ENCODE measurements at regions of chr2 and their contacts with region 1.

Region 1: GRCh38 chr2:235595422-235596010 is 101.7 kb downstream of the AGAP1 start:
- DNase-seq: peak; percentile 77
- ATAC-seq: peak; percentile 66
- H3K4me3 ChIP-seq: no peak overlapping the region
- H3K27ac ChIP-seq: no peak overlapping the region
- H3K4me1 ChIP-seq: peaks cover 6% of the 10 kb centered on the region
- H3K27me3 ChIP-seq: no peaks in the 10 kb centered on the region
- CTCF ChIP-seq: peak; percentile 91
- POLR2A ChIP-seq: peak; percentile 40; the same call in 1 of the 2 replicates
- RAD21 ChIP-seq: peak; percentile 91

Region 2: GRCh38 chr2:235135990-235136561 is 459.4 kb before region 1 on chr2:
- CTCF ChIA-PET with region 1: interaction called, 5 read pairs
- POLR2A ChIA-PET with region 1: no interaction called
- dilution Hi-C with region 1: no loop called
- in situ Hi-C with region 1: no loop called
- intact Hi-C with region 1: loop called (anchors 1 kb)
- DNase-seq: peak; percentile 82
- ATAC-seq: peak; percentile 96
- H3K4me3 ChIP-seq: no peak overlapping the region
- H3K27ac ChIP-seq: no peak overlapping the region
- H3K4me1 ChIP-seq: no peaks in the 10 kb centered on the region
- H3K27me3 ChIP-seq: peaks cover 36% of the 10 kb centered on the region
- CTCF ChIP-seq: peak; percentile 86
- POLR2A ChIP-seq: no peak
- RAD21 ChIP-seq: peak; percentile 88

Region 3: DNA sequence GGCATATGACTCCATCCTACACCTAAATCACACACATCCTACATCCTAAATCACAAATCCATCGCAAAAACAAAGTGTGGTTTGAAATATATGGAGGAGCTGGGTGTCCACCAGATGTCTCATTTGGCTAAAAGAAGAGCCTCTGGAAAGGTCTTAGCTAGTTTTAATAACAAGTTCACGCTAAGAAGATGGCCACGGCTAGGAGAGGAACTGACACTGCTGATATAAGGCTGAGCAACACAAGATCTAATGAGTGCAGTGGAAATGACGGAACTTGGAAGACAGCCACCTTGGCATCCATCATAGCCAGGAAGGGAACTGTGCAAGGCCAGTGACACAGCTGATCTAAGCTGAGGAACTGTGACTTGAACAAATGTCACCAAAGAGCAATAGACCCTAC is 161.7 kb before region 1 on chr2:
- CTCF ChIA-PET with region 1: interaction called, 4 read pairs
- POLR2A ChIA-PET with region 1: no interaction called
- dilution Hi-C with region 1: no loop called
- in situ Hi-C with region 1: no loop called
- intact Hi-C with region 1: loop called (anchors 10 kb)
- DNase-seq: peak; percentile 15
- ATAC-seq: peak; percentile 24; the same call in 1 of the 2 replicates
- H3K4me3 ChIP-seq: no peak overlapping the region
- H3K27ac ChIP-seq: no peak overlapping the region
- H3K4me1 ChIP-seq: no peaks in the 10 kb centered on the region
- H3K27me3 ChIP-seq: peaks cover 30% of the 10 kb centered on the region
- CTCF ChIP-seq: 0 out of 2 replicates have a peak, but pooled peaks have one; percentile 17
- POLR2A ChIP-seq: no peak
- RAD21 ChIP-seq: no peak

Region 4: GRCh38 chr2:235551965-235552364 is 43.6 kb before region 1 on chr2:
- CTCF ChIA-PET with region 1: interaction called, 11 read pairs
- POLR2A ChIA-PET with region 1: no interaction called
- dilution Hi-C with region 1: no loop called
- in situ Hi-C with region 1: no loop called
- intact Hi-C with region 1: no loop called
- DNase-seq: peak; percentile 48
- ATAC-seq: peak; percentile 79
- H3K4me3 ChIP-seq: no peak overlapping the region
- H3K27ac ChIP-seq: no peak overlapping the region
- H3K4me1 ChIP-seq: peaks cover 4% of the 10 kb centered on the region; the same call in 1 of the 2 replicates
- H3K27me3 ChIP-seq: no peaks in the 10 kb centered on the region
- CTCF ChIP-seq: peak; percentile 51
- POLR2A ChIP-seq: no peak
- RAD21 ChIP-seq: peak; percentile 53

Region 5: GRCh38 chr2:235740821-235741220 is 145.3 kb after region 1 on chr2:
- CTCF ChIA-PET with region 1: interaction called, 13 read pairs
- POLR2A ChIA-PET with region 1: no interaction called
- dilution Hi-C with region 1: no loop called
- in situ Hi-C with region 1: loop called (anchors 5 kb)
- intact Hi-C with region 1: loop called (anchors 1 kb)
- DNase-seq: no peak
- ATAC-seq: no peak
- H3K4me3 ChIP-seq: no peak overlapping the region
- H3K27ac ChIP-seq: no peak overlapping the region
- H3K4me1 ChIP-seq: peaks cover 3% of the 10 kb centered on the region; the same call in 1 of the 2 replicates
- H3K27me3 ChIP-seq: no peaks in the 10 kb centered on the region
- CTCF ChIP-seq: peak; percentile 27; the same call in 1 of the 2 replicates
- POLR2A ChIP-seq: no peak
- RAD21 ChIP-seq: peak; percentile 33